HEK293T (cell line): ENCODE measurements at regions of chr9 and their contacts with region 1.

Region 1: DNA sequence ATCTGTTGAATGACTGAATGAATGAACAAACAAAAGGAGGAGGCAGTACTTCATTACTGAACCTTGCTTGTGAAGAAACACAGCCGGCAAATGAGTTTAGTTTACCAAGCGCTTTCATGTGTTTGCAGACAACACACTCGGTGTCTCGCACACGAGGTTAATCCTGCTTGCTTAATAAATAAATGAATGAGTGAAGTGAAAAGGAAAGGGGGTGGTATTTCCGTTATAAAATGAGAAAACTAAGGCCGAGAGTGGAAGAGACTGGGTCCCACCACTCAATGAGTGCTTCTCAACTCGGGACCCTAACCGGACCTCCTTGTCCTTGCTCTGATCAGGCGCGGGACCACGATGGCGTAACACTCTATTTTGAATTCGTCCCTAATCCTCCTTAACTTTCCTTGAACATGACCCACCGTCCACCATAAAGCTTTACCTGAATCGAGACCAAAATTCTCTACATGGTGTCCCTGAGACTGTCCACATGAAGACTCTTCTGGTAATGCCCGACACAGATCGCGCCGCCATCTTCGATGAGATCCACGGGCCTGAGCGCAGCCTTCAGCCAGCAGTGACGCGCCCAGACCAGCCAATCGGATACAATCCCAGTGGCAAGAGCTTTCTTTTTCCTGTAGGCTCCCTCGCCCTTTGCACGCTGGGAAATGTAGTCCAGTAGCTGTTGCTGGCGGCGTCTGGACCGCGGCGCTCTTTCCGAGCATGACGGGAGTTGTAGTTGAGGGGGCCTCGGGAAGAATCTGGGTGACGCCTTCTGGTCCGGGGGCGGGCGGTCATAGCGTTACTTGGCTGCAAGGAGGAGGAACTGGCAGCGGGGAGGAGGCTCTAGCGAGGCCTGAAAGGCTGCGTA is at the starts of genes MRPL50 and ZNF189:
- DNase-seq: peak; percentile 94

Region 2: GRCh38 chr9:101387871-101388506 is 10.3 kb before region 1 on chr9:
- CTCF ChIA-PET with region 1: interaction called, 7 read pairs
- POLR2A ChIA-PET with region 1: interaction called, 13 read pairs
- DNase-seq: peak; percentile 27